Caco-2 (cell line): ENCODE measurements at regions of chr11 and their contacts with region 1.

Region 1: DNA sequence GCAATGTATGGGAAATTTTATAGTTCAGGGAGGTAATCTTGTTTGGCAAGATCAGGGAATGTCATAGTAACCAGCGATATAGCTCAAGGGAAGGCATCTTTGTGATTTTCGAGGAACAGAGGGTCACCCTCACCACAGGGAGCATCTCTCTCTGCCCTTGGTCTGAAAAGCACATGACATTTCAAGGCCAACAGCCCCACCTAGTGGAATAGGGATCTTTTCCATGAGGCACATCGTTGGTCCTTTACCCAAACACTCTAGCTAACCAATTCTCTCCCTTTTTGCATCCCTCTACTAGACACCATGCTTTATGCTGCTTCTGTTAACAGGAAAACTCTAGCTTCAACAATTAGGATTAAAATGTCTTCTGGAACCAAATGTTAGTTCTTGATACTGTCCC is 179.0 kb downstream of the GRM5 start:
- DNase-seq: peak; percentile 57 to 72
- H3K4me3 ChIP-seq: no peak overlapping the region
- H3K4me3 Mint-ChIP-seq: no peak overlapping the region
- H3K27ac Mint-ChIP-seq: no peak overlapping the region
- H3K4me1 ChIP-seq: no peaks in the 10 kb centered on the region
- H3K4me1 Mint-ChIP-seq: no peaks in the 10 kb centered on the region
- H3K27me3 ChIP-seq: no peaks in the 10 kb centered on the region
- H3K27me3 Mint-ChIP-seq: peaks cover 2% of the 10 kb centered on the region
- CTCF ChIP-seq: peak; percentile 49 to 57

Region 2: DNA sequence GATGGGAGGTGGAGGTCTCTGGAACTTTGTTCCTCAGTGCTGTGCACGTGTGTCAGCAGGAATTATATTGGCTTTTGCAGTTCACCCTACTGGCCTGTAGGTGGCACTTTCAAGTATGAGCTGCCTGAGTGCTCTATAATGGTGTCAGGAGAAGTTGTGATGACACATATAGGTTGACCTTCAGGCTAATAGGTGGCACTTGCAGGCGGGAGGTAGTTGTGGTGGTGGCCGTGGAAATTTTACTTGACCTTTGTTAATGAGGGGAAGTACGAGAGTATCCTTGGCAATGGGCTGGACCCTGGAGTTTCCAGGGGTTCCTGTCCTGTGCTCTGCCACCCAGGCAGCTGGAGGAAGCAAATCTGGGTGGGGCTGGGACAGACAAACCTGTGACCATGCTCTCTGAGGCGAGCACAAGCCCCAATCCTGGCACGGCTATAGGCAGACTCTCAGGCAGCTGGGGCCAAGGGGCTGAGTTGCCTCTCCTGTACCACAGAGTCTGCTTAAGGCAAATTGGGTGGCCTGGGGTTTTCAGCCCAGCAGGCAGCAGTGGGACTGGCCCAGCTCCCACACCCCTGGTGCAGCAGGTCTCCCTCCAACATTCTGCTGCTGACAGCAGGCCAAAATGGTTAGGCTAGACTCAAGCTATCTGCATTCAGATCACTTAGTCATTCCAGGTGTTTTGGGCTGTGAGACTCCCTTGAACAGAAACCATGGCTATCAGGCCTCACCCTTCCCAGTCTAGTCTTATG is 401.7 kb before region 1 on chr11:
- CTCF ChIA-PET with region 1: no interaction called
- POLR2A ChIA-PET with region 1: no interaction called
- intact Hi-C with region 1: loop called (anchors 1 kb)
- DNase-seq: peak; percentile 60 to 70
- H3K4me3 ChIP-seq: no peak overlapping the region
- H3K4me3 Mint-ChIP-seq: no peak overlapping the region
- H3K27ac Mint-ChIP-seq: no peak overlapping the region
- H3K4me1 ChIP-seq: no peaks in the 10 kb centered on the region
- H3K4me1 Mint-ChIP-seq: no peaks in the 10 kb centered on the region
- H3K27me3 ChIP-seq: no peaks in the 10 kb centered on the region
- H3K27me3 Mint-ChIP-seq: peaks cover 15% of the 10 kb centered on the region
- CTCF ChIP-seq: peak; percentile 79

Region 3: DNA sequence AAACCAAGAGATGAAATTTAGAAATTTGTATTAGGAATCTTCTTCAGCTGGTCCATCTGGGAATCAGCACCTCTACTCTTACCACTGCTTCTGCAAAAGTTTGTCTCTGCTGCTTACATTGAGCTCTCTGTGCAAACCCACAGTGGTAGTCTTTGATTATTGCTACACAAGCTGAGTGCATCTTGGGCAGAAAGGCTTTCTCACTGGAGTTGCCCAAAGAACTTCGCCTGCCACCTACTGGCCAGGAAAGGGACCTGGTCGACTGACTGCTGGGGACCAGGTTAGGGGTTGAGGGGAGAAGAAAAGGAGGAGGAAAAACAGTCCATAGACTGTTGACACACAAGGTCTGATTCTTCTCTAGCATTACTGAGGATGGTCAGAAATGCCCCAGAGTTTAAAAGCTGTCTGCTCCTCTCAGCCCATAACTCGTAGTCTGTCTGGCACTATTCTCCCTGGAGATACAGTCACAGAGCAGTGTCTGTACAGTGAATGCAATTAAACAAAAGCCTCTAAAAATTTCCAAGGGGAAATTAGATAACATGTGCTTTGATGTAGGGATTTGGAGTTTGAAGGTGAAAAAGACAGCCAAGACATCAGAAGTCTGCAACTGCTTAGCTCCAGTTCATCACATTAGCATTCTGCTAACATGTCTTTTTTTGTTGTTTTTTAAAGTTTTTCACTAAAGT is 334.3 kb before region 1 on chr11:
- CTCF ChIA-PET with region 1: no interaction called
- POLR2A ChIA-PET with region 1: no interaction called
- intact Hi-C with region 1: loop called (anchors 2 kb)
- DNase-seq: peak; percentile 75 to 79
- H3K4me3 ChIP-seq: no peak overlapping the region
- H3K4me3 Mint-ChIP-seq: no peak overlapping the region
- H3K27ac Mint-ChIP-seq: no peak overlapping the region
- H3K4me1 ChIP-seq: no peaks in the 10 kb centered on the region
- H3K4me1 Mint-ChIP-seq: no peaks in the 10 kb centered on the region
- H3K27me3 ChIP-seq: no peaks in the 10 kb centered on the region
- H3K27me3 Mint-ChIP-seq: peaks cover 14% of the 10 kb centered on the region
- CTCF ChIP-seq: peak; percentile 94 to 97

Region 4: GRCh38 chr11:88849368-88849767 is 37.4 kb before region 1 on chr11:
- CTCF ChIA-PET with region 1: no interaction called
- POLR2A ChIA-PET with region 1: no interaction called
- intact Hi-C with region 1: no loop called
- DNase-seq: no peak
- H3K4me3 ChIP-seq: no peak overlapping the region
- H3K4me3 Mint-ChIP-seq: no peak overlapping the region
- H3K27ac Mint-ChIP-seq: no peak overlapping the region
- H3K4me1 ChIP-seq: no peaks in the 10 kb centered on the region
- H3K4me1 Mint-ChIP-seq: no peaks in the 10 kb centered on the region
- H3K27me3 ChIP-seq: no peaks in the 10 kb centered on the region
- H3K27me3 Mint-ChIP-seq: peaks cover 4% of the 10 kb centered on the region
- CTCF ChIP-seq: no peak